K562 (cell line): ENCODE measurements at regions of chr7 and their contacts with region 1.

Region 1: DNA sequence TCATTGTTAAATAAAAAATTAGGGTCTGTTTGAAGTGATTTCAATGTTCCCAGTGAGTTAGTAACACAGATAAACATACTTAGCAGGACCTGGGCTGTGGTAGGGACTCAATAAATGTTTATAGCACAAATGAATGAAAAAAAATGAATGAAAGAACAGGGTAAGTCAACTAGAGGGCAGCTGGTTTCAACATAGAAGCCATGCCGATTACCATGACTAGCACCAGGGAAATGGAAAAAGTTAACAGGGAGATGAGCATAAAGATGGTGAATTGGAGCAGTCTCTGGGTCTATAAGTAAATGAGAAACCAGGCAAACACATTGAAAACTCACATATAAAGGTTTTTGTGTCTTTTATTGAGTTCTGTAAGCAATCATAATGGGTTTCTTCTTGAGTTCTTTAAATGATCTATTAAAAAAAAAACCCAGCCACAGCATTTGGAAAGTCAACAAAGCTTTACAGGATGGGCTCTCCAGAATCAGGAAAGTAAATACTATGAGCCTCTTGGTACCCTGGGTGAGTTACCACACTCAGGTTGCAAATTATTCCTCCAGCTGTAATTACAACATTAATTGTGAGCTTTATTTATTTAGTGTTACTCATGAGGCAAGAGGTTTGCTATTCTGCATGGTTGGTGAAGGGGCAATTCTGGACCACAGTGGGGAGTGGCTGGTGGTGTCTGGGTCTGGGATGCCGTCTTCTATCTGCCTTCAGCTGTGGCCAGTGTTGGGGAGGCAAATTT is 46.1 kb upstream of the MTPN start:
- DNase-seq: no peak
- ATAC-seq: peak; percentile 10; the same call in 1 of the 3 replicates
- H3K4me3 ChIP-seq: no peak overlapping the region
- H3K27ac ChIP-seq: no peak overlapping the region
- H3K4me1 ChIP-seq: peaks cover 0 to 4% of the 10 kb centered on the region in 2 experiments; a peak in 2 of 5 replicates
- H3K27me3 ChIP-seq: no peaks in the 10 kb centered on the region
- CTCF ChIP-seq: peak in 1 of 3 experiments; percentile 11; a peak in 1 of 6 replicates
- EP300 ChIP-seq: no peak
- POLR2A ChIP-seq: no peak
- RAD21 ChIP-seq: 0 out of 4 replicates have a peak, but pooled peaks of 1 of the 2 experiments have one; percentile 13

Region 2: GRCh38 chr7:135930565-135931461 is 92.5 kb before region 1 on chr7:
- CTCF ChIA-PET with region 1: no interaction called
- POLR2A ChIA-PET with region 1: no interaction called
- in situ Hi-C with region 1: no loop called
- intact Hi-C with region 1: no loop called
- DNase-seq: no peak
- ATAC-seq: peak; percentile 3; the same call in 1 of the 3 replicates
- H3K4me3 ChIP-seq: no peak overlapping the region
- H3K27ac ChIP-seq: no peak overlapping the region
- H3K4me1 ChIP-seq: peaks cover 21 to 53% of the 10 kb centered on the region in 2 experiments
- H3K27me3 ChIP-seq: no peaks in the 10 kb centered on the region
- CTCF ChIP-seq: no peak
- EP300 ChIP-seq: no peak
- POLR2A ChIP-seq: 0 out of 2 replicates have a peak, but pooled peaks have one; percentile 37
- RAD21 ChIP-seq: no peak

Region 3: GRCh38 chr7:136163340-136163801 is 140.1 kb after region 1 on chr7:
- CTCF ChIA-PET with region 1: no interaction called
- POLR2A ChIA-PET with region 1: no interaction called
- in situ Hi-C with region 1: no loop called
- intact Hi-C with region 1: no loop called
- DNase-seq: no peak
- ATAC-seq: peak; percentile 58
- H3K4me3 ChIP-seq: no peak overlapping the region
- H3K27ac ChIP-seq: no peak overlapping the region
- H3K4me1 ChIP-seq: no peaks in the 10 kb centered on the region
- H3K27me3 ChIP-seq: no peaks in the 10 kb centered on the region
- CTCF ChIP-seq: no peak
- EP300 ChIP-seq: no peak
- POLR2A ChIP-seq: no peak
- RAD21 ChIP-seq: no peak

Region 4: GRCh38 chr7:136687693-136688322 is 664.5 kb after region 1 on chr7:
- CTCF ChIA-PET with region 1: no interaction called
- POLR2A ChIA-PET with region 1: no interaction called
- in situ Hi-C with region 1: no loop called
- intact Hi-C with region 1: loop called (anchors 10 kb)
- DNase-seq: peak; percentile 24 to 53 (median 50)
- ATAC-seq: peak; percentile 67
- H3K4me3 ChIP-seq: no peak overlapping the region
- H3K27ac ChIP-seq: no peak overlapping the region
- H3K4me1 ChIP-seq: no peaks in the 10 kb centered on the region
- H3K27me3 ChIP-seq: no peaks in the 10 kb centered on the region
- CTCF ChIP-seq: peak; percentile 46 to 75 (median 60); a peak in 5 of 6 replicates
- EP300 ChIP-seq: no peak
- POLR2A ChIP-seq: no peak
- RAD21 ChIP-seq: peak; percentile 51 to 62